Tibial artery (tissue), 4 donors: ENCODE measurements at regions of chr22 and their contacts with region 1.

Region 1: GRCh38 chr22:22939588-22940367 is 52.2 kb downstream of the IGLL5 start:
- DNase-seq: no peak
- H3K4me3 ChIP-seq: no peak overlapping the region
- H3K27ac ChIP-seq: no peak overlapping the region
- H3K4me1 ChIP-seq: no peaks in the 10 kb centered on the region
- H3K27me3 ChIP-seq: peaks cover 0 to 31% of the 10 kb centered on the region in 2 donors
- CTCF ChIP-seq: no peak

Region 2: GRCh38 chr22:22890085-22890484 is 49.7 kb before region 1 on chr22:
- intact Hi-C with region 1: loop called (anchors 2 kb)
- DNase-seq: no peak
- H3K4me3 ChIP-seq: no peak overlapping the region
- H3K27ac ChIP-seq: no peak overlapping the region
- H3K4me1 ChIP-seq: no peaks in the 10 kb centered on the region
- H3K27me3 ChIP-seq: peaks cover 0 to 48% of the 10 kb centered on the region in 2 donors
- CTCF ChIP-seq: no peak